Activated B cell treated with CpG ODN at 0.5 μM for 24 hours (primary cell): ENCODE measurements at regions of chr22 and their contacts with region 1.

Region 1: DNA sequence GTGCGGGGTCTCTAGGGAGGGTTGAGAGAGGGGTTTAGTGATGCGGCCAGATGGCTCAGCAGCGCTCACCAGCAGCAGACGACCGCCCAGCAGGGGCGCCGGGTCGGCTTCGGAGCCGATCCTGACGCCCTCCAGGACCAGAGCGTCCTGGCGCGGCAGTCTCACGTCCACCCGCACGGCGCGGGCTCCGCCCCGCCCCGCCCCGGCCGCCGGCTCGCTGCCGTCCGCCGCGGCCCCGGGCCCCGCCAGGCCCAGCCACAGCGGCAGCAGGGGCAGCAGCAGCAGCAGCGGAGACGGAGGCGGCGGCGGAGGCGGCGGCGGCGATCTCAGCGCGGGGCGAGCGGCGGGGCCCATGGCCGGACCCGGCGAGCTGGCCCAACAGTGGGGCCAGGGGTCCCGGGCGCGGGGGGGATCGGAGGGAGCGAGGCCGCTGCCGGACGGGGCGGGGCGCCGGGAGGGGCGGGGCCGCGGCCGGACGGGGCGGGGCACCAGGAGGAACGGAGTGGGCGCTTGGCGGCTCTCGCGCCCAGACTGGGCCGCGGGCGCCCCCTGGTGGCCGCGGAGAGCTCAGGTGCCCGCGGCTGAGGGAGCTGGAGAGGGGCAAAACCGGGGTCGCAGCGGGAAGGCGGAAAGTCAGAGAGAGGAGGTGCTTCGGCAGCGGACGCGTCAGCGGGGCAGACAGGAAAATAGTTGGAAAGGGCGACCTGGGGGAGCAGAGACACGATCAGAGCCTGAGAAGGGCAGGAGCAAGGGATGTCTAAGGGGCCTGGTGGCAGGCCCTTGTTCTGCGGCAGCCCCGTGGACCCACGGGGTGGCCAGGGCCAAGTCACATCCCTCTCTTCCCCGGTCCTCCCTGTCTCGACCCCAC is at the start of gene RNF215:
- DNase-seq: peak; percentile 94
- ATAC-seq: peak; percentile 85
- H3K4me3 Mint-ChIP-seq: peak within 1 kb of the TSS; percentile 84
- H3K27ac Mint-ChIP-seq: peak within 1 kb of the TSS; percentile 41
- H3K4me1 Mint-ChIP-seq: peaks cover 25% of the 10 kb centered on the region
- H3K27me3 Mint-ChIP-seq: peaks cover 3% of the 10 kb centered on the region
- CTCF ChIP-seq: no peak
- total RNA-seq, gene RNF215: 8.6 and 8.8 TPM in 2 replicates

Region 2: GRCh38 chr22:30104501-30105156 is 282.6 kb before region 1 on chr22:
- CTCF ChIA-PET with region 1: interaction called, 7 read pairs
- POLR2A ChIA-PET with region 1: no interaction called
- intact Hi-C with region 1: loop called (anchors 1 kb)
- DNase-seq: no peak
- ATAC-seq: no peak
- H3K4me3 Mint-ChIP-seq: no peak overlapping the region
- H3K27ac Mint-ChIP-seq: no peak overlapping the region
- H3K4me1 Mint-ChIP-seq: peaks cover 6% of the 10 kb centered on the region
- H3K27me3 Mint-ChIP-seq: peaks cover 7% of the 10 kb centered on the region
- CTCF ChIP-seq: no peak

Region 3: GRCh38 chr22:30262917-30263741 is 124.1 kb before region 1 on chr22:
- CTCF ChIA-PET with region 1: interaction called, 27 read pairs
- POLR2A ChIA-PET with region 1: no interaction called
- intact Hi-C with region 1: loop called (anchors 1 kb)
- DNase-seq: peak; percentile 72
- ATAC-seq: peak; percentile 13
- H3K4me3 Mint-ChIP-seq: peak overlapping the region; percentile 59
- H3K27ac Mint-ChIP-seq: peak overlapping the region; percentile 18
- H3K4me1 Mint-ChIP-seq: peaks cover 27% of the 10 kb centered on the region
- H3K27me3 Mint-ChIP-seq: no peaks in the 10 kb centered on the region
- CTCF ChIP-seq: peak; percentile 97

Region 4: DNA sequence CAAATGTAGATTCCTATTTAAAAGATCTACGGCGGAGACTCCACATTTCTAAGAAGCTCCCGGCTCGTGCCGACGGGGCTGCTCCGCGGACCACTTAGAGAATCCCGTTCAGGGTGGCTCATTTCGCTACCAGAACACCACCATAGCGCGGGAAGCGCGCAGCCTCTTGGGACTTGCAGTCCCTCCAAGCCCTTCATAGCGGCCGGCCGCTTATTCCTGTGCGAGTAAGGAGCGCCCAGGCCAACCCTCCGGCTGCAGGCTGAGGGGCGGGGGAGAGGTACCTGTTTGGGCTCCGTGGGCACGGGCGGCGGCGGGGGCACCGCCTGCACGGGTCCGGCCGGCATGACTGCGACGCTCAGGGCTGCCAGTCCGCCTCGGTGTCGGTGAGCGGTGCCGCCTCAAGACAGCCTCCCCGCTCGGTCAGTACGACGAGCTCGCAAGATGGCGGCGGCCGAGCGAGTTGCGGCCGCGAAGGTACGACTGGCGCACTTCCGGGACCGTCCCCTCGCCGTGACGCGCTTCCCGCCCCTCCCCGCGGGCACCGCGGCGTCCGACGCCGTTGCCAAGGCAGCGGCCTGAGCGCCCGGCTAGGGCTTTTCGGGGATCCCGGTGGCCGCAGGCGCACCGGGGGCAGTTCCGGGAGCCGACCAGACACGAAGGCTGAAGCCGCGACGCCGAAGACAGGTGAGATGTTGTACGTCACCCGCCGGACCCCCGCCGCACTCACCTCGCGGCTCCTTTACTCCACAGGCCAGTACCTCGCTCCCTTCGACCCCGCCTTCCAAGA is 30.6 kb before region 1 on chr22 and contains the starts of genes CCDC157 and SF3A1:
- CTCF ChIA-PET with region 1: interaction called, 5 read pairs
- POLR2A ChIA-PET with region 1: interaction called, 10 read pairs
- intact Hi-C with region 1: loop called (anchors 1 kb)
- DNase-seq: peak; percentile 88
- ATAC-seq: peak; percentile 86
- H3K4me3 Mint-ChIP-seq: peak within 1 kb of the TSS; percentile 92
- H3K27ac Mint-ChIP-seq: peak within 1 kb of the TSS; percentile 76
- H3K4me1 Mint-ChIP-seq: peaks cover 43% of the 10 kb centered on the region
- H3K27me3 Mint-ChIP-seq: no peaks in the 10 kb centered on the region
- CTCF ChIP-seq: no peak
- total RNA-seq, gene CCDC157: 1.8 and 2.9 TPM in 2 replicates
- total RNA-seq, gene SF3A1: 263 and 269 TPM in 2 replicates

Region 5: DNA sequence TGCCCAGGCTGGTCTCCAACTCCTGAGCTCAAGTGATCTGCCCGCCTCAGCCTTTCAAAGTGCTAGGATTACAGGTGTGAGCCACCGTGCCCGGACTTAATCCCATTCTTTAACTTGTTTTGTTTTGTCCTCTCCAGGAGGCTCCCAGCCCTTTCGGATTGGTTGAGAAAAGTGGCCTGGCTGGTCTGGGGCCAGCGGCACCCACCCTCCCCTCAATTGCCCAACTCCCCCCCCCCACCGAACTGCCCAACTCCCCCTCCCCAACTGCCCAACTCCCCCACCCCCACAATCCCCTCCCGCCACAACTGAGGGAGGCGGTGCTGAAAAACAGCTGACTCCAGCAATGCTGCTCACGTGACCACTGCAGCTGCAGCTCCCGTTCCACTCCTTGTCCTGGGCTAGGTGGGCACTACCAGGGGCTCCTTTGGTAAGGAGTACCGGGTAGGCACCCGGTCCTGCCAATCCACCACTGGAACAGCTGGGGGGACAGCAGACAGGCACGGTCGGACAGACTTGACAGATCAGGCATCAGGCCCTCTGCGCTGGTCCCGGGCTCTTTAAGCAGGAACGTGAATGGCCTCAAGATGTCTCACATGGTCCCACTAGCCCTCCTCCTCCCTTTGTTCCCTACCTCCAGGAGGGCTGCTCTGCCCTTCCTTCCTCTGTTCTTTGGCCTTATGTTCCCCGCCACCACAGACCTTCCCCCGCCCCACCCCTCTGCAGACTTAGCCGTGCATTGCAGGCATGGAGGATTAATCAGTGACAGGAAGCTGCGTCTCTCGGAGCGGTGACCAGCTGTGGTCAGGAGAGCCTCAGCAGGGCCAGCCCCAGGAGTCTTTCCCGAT is 219.5 kb after region 1 on chr22 and contains the start of gene TCN2:
- CTCF ChIA-PET with region 1: no interaction called
- POLR2A ChIA-PET with region 1: interaction called, 6 read pairs
- intact Hi-C with region 1: loop called (anchors 1 kb)
- DNase-seq: peak; percentile 22
- ATAC-seq: peak; percentile 59
- H3K4me3 Mint-ChIP-seq: peak within 1 kb of the TSS; percentile 83
- H3K27ac Mint-ChIP-seq: peak within 1 kb of the TSS; percentile 20
- H3K4me1 Mint-ChIP-seq: peaks cover 35% of the 10 kb centered on the region
- H3K27me3 Mint-ChIP-seq: peaks cover 5% of the 10 kb centered on the region
- CTCF ChIP-seq: no peak
- total RNA-seq, gene TCN2: not detected in 2 replicates